Endothelial cell of umbilical vein (primary cell): ENCODE measurements at regions of chr12 and their contacts with region 1.

Region 1: DNA sequence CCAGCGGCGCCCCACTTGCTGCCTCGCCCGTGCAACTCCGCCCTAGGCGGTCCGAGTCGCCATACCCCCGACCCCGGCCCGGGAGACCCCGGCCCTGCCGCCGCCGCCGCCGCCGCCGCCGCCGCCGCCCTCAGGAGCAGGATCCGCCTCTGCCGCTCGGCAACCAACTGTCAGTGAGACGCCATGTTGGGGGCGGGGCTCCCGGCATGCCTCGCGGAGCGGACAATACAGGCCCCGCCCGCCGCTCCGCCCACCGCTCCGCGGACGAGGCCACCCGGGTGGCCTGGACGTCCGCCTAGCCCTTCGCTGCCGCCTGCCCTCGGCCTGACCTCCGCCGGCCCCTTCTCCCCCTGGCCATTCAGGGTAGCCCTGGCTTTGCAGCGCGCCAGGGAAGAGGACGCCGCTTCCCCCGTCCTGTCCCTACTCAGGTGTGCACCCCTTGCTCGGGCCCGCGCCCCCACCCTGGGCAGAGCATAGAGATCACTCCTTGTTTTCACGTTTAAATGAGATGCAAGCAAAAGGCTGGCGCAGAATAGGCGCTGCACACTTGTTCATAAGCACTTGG is at the start of gene HECTD4:
- DNase-seq: peak; percentile 84
- H3K4me3 ChIP-seq: peak within 1 kb of the TSS; percentile 71 to 95 (median 72)
- H3K27ac ChIP-seq: peak within 1 kb of the TSS; percentile 35
- H3K4me1 ChIP-seq: peaks cover 12% of the 10 kb centered on the region
- H3K27me3 ChIP-seq: no peaks in the 10 kb centered on the region
- CTCF ChIP-seq: no peak
- POLR2A ChIP-seq: peak; percentile 93
- total RNA-seq, gene HECTD4: 38.8 and 47.7 TPM in 2 replicates

Region 2: GRCh38 chr12:112012775-112013600 is 369.3 kb before region 1 on chr12 and contains the starts of genes ERP29 and TMEM116:
- CTCF ChIA-PET with region 1: no interaction called
- POLR2A ChIA-PET with region 1: no interaction called
- dilution Hi-C with region 1: no loop called
- intact Hi-C with region 1: loop called (anchors 10 kb)
- DNase-seq: peak; percentile 100
- H3K4me3 ChIP-seq: peak within 1 kb of the TSS; percentile 72 to 81 (median 77)
- H3K27ac ChIP-seq: peak within 1 kb of the TSS; percentile 57
- H3K4me1 ChIP-seq: peaks cover 26% of the 10 kb centered on the region
- H3K27me3 ChIP-seq: no peaks in the 10 kb centered on the region
- CTCF ChIP-seq: peak; percentile 42 to 55
- POLR2A ChIP-seq: peak; percentile 99
- total RNA-seq, gene ERP29: 108 and 116 TPM in 2 replicates
- total RNA-seq, gene TMEM116: 1.6 TPM in 2 replicates

Region 3: GRCh38 chr12:112198120-112198733 is 184.1 kb before region 1 on chr12:
- CTCF ChIA-PET with region 1: interaction called, 253 read pairs
- POLR2A ChIA-PET with region 1: no interaction called
- dilution Hi-C with region 1: no loop called
- intact Hi-C with region 1: loop called (anchors 1 kb)
- DNase-seq: peak; percentile 59
- H3K4me3 ChIP-seq: no peak overlapping the region
- H3K27ac ChIP-seq: no peak overlapping the region
- H3K4me1 ChIP-seq: no peaks in the 10 kb centered on the region
- H3K27me3 ChIP-seq: no peaks in the 10 kb centered on the region
- CTCF ChIP-seq: peak; percentile 47 to 72
- POLR2A ChIP-seq: no peak

Region 4: GRCh38 chr12:112252184-112252583 is 130.1 kb before region 1 on chr12:
- CTCF ChIA-PET with region 1: interaction called, 14 read pairs
- POLR2A ChIA-PET with region 1: no interaction called
- dilution Hi-C with region 1: no loop called
- intact Hi-C with region 1: no loop called
- DNase-seq: no peak
- H3K4me3 ChIP-seq: no peak overlapping the region
- H3K27ac ChIP-seq: no peak overlapping the region
- H3K4me1 ChIP-seq: no peaks in the 10 kb centered on the region
- H3K27me3 ChIP-seq: no peaks in the 10 kb centered on the region
- CTCF ChIP-seq: no peak
- POLR2A ChIP-seq: no peak

Region 5: DNA sequence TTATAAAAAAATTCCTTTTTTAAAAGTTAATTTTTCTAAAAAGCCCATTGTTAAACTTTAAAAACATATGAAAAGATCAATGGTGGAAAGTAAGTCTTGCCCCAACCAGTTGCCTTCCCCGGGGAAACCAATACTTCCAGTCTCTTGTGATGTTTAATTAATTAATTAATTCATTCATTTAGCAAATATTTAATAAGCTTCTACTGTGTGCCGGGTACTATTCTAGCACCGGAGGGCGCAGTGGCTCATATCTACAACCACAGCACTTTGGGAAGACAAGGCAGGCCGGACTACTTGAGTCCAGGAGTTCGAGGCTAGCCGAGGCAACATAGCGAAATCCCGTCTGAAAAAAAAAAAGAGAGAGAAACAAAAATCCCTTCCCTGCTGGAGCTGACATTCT is 87.5 kb before region 1 on chr12:
- CTCF ChIA-PET with region 1: interaction called, 14 read pairs
- POLR2A ChIA-PET with region 1: no interaction called
- dilution Hi-C with region 1: no loop called
- intact Hi-C with region 1: loop called (anchors 2 kb)
- DNase-seq: peak; percentile 36
- H3K4me3 ChIP-seq: no peak overlapping the region
- H3K27ac ChIP-seq: no peak overlapping the region
- H3K4me1 ChIP-seq: no peaks in the 10 kb centered on the region
- H3K27me3 ChIP-seq: no peaks in the 10 kb centered on the region
- CTCF ChIP-seq: no peak
- POLR2A ChIP-seq: no peak

Region 6: DNA sequence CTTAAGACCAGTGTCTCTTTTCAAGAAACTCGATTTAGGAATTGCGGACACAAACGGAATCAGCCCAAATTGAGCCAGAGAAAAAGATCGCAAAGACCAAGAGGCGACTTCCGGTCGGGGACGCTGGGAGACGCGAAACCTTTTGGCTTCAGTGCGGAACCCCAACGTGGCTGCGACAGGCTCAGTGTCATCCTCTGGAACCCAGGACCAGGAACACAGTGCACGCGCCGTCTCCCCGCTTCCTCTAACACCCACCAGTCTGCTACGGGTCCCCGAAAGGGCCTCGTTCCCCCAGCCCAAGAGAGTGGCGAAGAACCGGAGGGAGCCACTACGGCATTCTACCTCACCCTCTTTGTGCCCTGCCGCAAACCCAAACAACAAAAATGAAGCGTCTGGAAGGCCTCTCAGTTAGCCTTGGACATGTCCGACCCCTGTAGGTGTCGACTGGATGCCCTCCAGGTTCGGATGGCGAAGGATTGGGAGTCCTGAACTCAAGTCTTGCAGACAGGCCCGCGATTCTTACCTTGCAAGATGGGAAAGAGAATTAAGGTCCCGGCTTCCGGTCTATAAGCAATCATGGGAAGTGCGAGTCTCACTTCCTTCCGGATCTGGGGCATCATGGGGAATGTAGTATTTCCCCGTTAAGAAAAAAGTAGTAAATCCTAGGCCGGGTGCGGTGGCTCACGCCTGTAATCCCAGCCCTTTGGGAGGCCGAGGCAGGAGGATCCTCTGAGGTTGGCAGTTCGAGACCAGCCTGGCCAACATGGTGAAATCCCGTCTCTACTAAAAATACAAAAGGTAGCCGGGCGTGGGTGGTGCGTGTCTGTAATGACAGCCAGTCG is 27.0 kb after region 1 on chr12 and contains the start of gene RPL6:
- CTCF ChIA-PET with region 1: interaction called, 10 read pairs
- POLR2A ChIA-PET with region 1: no interaction called
- dilution Hi-C with region 1: no loop called
- intact Hi-C with region 1: loop called (anchors 1 kb)
- DNase-seq: peak; percentile 93
- H3K4me3 ChIP-seq: peak within 1 kb of the TSS; percentile 63 to 91 (median 89)
- H3K27ac ChIP-seq: peak within 1 kb of the TSS; percentile 77
- H3K4me1 ChIP-seq: peaks cover 20% of the 10 kb centered on the region
- H3K27me3 ChIP-seq: peaks cover 0 to 4% of the 10 kb centered on the region in 2 experiments
- CTCF ChIP-seq: no peak
- POLR2A ChIP-seq: peak; percentile 99
- total RNA-seq, gene RPL6: 1,359 and 1,385 TPM in 2 replicates

Region 7: GRCh38 chr12:112463478-112463877 is 81.2 kb after region 1 on chr12:
- CTCF ChIA-PET with region 1: no interaction called
- POLR2A ChIA-PET with region 1: no interaction called
- dilution Hi-C with region 1: no loop called
- intact Hi-C with region 1: no loop called
- DNase-seq: no peak
- H3K4me3 ChIP-seq: no peak overlapping the region
- H3K27ac ChIP-seq: no peak overlapping the region
- H3K4me1 ChIP-seq: no peaks in the 10 kb centered on the region
- H3K27me3 ChIP-seq: no peaks in the 10 kb centered on the region
- CTCF ChIP-seq: no peak
- POLR2A ChIP-seq: no peak